ENCODE measurements at regions of chr12 and their contacts with region 1.

Region 1: DNA sequence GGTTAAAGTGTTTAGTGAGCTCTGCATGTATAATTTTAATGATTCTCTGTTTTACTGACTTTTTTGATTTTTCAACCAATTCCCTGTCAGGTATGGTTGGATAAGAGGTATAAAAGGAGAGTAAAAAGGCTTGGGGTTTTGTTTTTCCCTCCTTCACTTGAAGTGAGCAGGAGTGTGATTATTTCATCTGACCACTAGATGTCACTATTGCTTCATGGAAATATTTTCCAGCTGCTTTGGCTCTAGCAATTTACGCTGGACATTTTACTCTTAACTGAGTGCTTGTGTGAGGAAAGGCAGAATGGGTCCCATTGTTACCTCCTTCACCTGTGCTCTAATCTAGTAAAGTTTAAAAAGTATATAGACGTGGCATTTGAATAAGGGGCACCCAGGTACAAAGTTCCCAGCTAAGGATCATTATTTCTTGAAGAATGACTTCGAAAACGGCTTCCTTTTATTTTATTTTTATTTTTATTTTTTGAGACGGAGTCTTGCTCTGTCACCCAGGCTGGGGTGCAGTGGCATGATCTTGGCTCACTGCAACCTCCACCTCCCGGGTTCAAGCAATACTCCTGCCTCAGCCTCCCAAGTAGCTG is 66.5 kb downstream of the TBC1D30 start:
- DNase-seq: no peak
- H3K4me3 ChIP-seq: no peak overlapping the region
- H3K27ac ChIP-seq: no peak overlapping the region
- H3K4me1 ChIP-seq: no peaks in the 10 kb centered on the region
- H3K27me3 ChIP-seq: peaks cover 0 to 18% of the 10 kb centered on the region in 2 donors
- CTCF ChIP-seq: peak; percentile 75 to 91

Region 2: GRCh38 chr12:65121049-65121955 is 230.3 kb after region 1 on chr12 and contains the start of gene WIF1:
- intact Hi-C with region 1: loop called (anchors 5 kb)
- DNase-seq: peak in 1 of 2 donors; percentile 63
- H3K4me3 ChIP-seq: peak within 1 kb of the TSS; percentile 9 to 39
- H3K27ac ChIP-seq: no peak within 1 kb of the TSS
- H3K4me1 ChIP-seq: peaks cover 0 to 10% (median 9%) of the 10 kb centered on the region in 4 donors
- H3K27me3 ChIP-seq: peaks cover 0 to 65% of the 10 kb centered on the region in 2 donors
- CTCF ChIP-seq: no peak

Region 3: GRCh38 chr12:65232476-65233077 is 341.6 kb after region 1 on chr12:
- intact Hi-C with region 1: loop called (anchors 10 kb)
- DNase-seq: no peak
- H3K4me3 ChIP-seq: no peak overlapping the region
- H3K27ac ChIP-seq: no peak overlapping the region
- H3K4me1 ChIP-seq: no peaks in the 10 kb centered on the region
- H3K27me3 ChIP-seq: no peaks in the 10 kb centered on the region
- CTCF ChIP-seq: peak; percentile 43 to 45

Region 4: DNA sequence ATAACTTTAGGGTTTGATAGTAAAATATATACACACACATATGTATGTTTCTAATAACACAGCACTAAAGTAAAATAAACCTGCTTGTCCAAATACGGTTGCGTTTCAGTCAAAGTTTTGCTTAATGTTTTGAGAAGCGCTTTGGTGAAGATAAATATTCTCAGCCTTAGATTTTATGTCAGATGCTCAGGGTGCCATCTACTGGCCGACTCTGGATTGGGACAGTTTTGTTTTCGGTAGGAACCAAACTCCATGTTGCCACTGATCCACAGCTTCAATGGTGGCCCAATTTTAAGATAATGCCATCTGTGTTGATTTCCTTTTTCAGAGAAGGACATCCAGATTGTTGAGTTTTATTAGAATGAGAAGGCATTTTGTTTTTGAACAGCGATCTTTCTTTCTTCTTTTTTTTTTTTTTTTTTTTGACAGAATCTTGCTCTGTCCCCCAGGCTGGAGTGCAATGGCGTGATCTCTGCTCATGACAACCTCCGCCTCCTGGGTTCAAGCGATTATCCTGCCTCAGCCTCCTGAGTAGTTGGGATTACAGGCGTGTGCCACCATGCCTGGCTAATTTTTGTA is 1196.5 kb after region 1 on chr12:
- intact Hi-C with region 1: loop called (anchors 10 kb)
- DNase-seq: peak; percentile 73 to 75
- H3K4me3 ChIP-seq: no peak overlapping the region
- H3K27ac ChIP-seq: no peak overlapping the region
- H3K4me1 ChIP-seq: peaks cover 0 to 9% (median 4%) of the 10 kb centered on the region in 4 donors
- H3K27me3 ChIP-seq: peaks cover 0 to 4% of the 10 kb centered on the region in 2 donors
- CTCF ChIP-seq: peak; percentile 72 to 73

Measured in tibial artery (tissue), 4 donors.